AG04450 (cell line): ENCODE measurements at regions of chr6 and their contacts with region 1.

Region 1: GRCh38 chr6:53956068-53956711 is 155.1 kb upstream of the MLIP start:
- DNase-seq: peak; percentile 32
- H3K4me3 ChIP-seq: no peak overlapping the region
- H3K27ac ChIP-seq: no peak overlapping the region
- H3K27me3 ChIP-seq: no peaks in the 10 kb centered on the region
- CTCF ChIP-seq: peak; percentile 92

Region 2: GRCh38 chr6:53752856-53753255 is 203.3 kb before region 1 on chr6:
- CTCF ChIA-PET with region 1: interaction called, 21 read pairs
- POLR2A ChIA-PET with region 1: no interaction called
- DNase-seq: peak; percentile 7
- H3K4me3 ChIP-seq: no peak overlapping the region
- H3K27ac ChIP-seq: no peak overlapping the region
- H3K27me3 ChIP-seq: no peaks in the 10 kb centered on the region
- CTCF ChIP-seq: no peak

Region 3: DNA sequence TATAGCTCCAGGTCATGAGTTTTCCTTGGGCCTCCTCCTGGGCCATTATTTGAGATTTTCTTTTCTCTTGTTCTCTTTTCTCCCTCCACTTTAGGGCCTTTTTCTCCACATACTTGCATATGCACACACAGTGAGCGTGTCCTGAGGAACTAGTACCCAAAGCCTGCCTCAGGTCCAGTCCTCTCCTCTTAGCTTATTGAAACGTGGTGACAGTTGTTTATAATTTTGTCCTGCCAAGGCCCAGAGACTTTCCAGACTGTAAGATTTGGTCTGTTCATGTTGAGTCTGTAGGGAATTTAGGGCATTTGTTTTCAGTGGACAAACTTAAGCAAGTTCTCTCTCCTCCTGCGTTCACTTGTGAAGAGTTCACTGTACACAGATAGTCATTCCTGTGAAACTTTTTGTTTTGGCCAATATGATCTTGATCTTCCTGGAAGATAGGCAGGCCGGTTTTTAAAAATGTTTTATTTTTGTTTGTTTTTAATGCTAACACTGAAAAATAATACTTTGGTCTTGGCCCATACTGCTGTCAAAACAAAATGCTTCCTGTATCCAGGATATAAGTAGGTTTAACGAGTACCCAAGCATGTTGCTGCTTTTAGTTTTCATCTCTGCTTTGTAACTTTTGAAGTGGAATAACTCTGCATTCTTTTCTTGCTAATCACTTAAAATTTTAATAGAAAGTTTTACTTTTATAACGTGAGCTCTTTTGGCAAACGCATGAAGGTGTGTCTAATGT is 140.6 kb before region 1 on chr6:
- CTCF ChIA-PET with region 1: interaction called, 16 read pairs
- POLR2A ChIA-PET with region 1: no interaction called
- DNase-seq: no peak
- H3K4me3 ChIP-seq: no peak overlapping the region
- H3K27ac ChIP-seq: no peak overlapping the region
- H3K27me3 ChIP-seq: no peaks in the 10 kb centered on the region
- CTCF ChIP-seq: no peak

Region 4: DNA sequence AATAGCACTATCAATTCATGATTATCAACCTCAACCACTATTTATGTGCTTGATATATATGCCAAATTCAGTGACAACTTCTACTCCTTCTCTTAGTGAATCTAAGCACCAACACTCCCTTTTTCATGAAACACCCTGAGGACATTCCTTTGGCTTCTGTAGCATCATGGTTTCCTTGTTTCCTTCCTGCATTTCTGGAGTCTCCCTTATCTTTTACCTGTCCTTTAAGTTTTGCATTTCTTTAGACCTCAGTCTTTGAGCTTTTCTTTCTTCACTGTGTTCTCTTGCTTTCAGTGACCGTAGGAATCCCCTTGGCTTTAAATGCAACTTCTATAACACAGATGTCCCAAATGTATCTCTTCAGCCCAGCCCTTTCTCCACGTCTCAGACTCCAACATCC is 11.2 kb after region 1 on chr6:
- CTCF ChIA-PET with region 1: interaction called, 19 read pairs
- POLR2A ChIA-PET with region 1: interaction called, 11 read pairs
- DNase-seq: no peak
- H3K4me3 ChIP-seq: no peak overlapping the region
- H3K27ac ChIP-seq: no peak overlapping the region
- H3K27me3 ChIP-seq: no peaks in the 10 kb centered on the region
- CTCF ChIP-seq: no peak